ENCODE measurements at regions of chr2 and their contacts with region 1.

Region 1: GRCh38 chr2:46385786-46386577 is 88.8 kb downstream of the EPAS1 start:
- DNase-seq: no peak
- H3K4me3 ChIP-seq: no peak overlapping the region
- H3K27ac ChIP-seq: peak overlapping the region in 1 of 5 donors; percentile 47
- H3K4me1 ChIP-seq: peaks cover 0 to 20% (median 0%) of the 10 kb centered on the region in 4 donors
- H3K27me3 ChIP-seq: no peaks in the 10 kb centered on the region
- CTCF ChIP-seq: no peak
- EP300 ChIP-seq: no peak
- POLR2A ChIP-seq: no peak

Region 2: GRCh38 chr2:46451131-46451711 is 65.2 kb after region 1 on chr2:
- intact Hi-C with region 1: loop called (anchors 10 kb)
- DNase-seq: no peak
- H3K4me3 ChIP-seq: no peak overlapping the region
- H3K27ac ChIP-seq: no peak overlapping the region
- H3K4me1 ChIP-seq: peaks cover 0 to 12% (median 4%) of the 10 kb centered on the region in 4 donors
- H3K27me3 ChIP-seq: no peaks in the 10 kb centered on the region
- CTCF ChIP-seq: no peak
- EP300 ChIP-seq: no peak
- POLR2A ChIP-seq: no peak

Region 3: GRCh38 chr2:46776687-46777327 is 390.8 kb after region 1 on chr2:
- intact Hi-C with region 1: no loop called
- DNase-seq: peak; percentile 65 to 74
- H3K4me3 ChIP-seq: no peak overlapping the region
- H3K27ac ChIP-seq: no peak overlapping the region
- H3K4me1 ChIP-seq: peaks cover 0 to 26% (median 13%) of the 10 kb centered on the region in 4 donors
- H3K27me3 ChIP-seq: no peaks in the 10 kb centered on the region
- CTCF ChIP-seq: peak in 5 of 7 experiments; percentile 25 to 67 (median 50)
- EP300 ChIP-seq: no peak
- POLR2A ChIP-seq: no peak